Endothelial cell of umbilical vein (primary cell): ENCODE measurements at regions of chr3 and their contacts with region 1.

Region 1: DNA sequence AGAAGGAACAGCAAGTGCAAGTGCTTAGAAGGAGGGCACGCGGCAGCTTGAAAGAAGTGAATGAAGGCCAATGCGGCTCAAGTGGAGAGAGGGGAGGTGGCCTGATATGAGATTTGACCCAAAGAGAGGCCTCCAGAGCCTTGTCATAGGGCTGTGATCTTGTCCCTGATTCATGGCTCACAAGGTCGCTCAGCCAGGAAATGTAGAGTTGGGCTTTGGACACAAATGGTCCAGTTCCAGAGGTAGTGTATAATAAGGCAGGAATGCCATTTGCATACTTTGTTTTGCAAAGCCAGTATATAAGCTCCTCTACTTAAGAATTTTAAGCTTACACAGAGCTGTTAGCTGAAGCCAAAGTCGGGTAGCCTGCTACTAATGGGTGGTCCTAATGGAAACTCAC is 33.7 kb downstream of the HGD start:
- DNase-seq: no peak
- H3K4me3 ChIP-seq: no peak overlapping the region
- H3K27ac ChIP-seq: no peak overlapping the region
- H3K4me1 ChIP-seq: no peaks in the 10 kb centered on the region
- H3K27me3 ChIP-seq: no peaks in the 10 kb centered on the region
- CTCF ChIP-seq: no peak
- POLR2A ChIP-seq: no peak

Region 2: GRCh38 chr3:120636790-120637401 is 11.4 kb before region 1 on chr3:
- CTCF ChIA-PET with region 1: no interaction called
- POLR2A ChIA-PET with region 1: interaction called, 10 read pairs
- dilution Hi-C with region 1: no loop called
- intact Hi-C with region 1: no loop called
- DNase-seq: no peak
- H3K4me3 ChIP-seq: no peak overlapping the region
- H3K27ac ChIP-seq: no peak overlapping the region
- H3K4me1 ChIP-seq: no peaks in the 10 kb centered on the region
- H3K27me3 ChIP-seq: no peaks in the 10 kb centered on the region
- CTCF ChIP-seq: no peak
- POLR2A ChIP-seq: no peak

Region 3: DNA sequence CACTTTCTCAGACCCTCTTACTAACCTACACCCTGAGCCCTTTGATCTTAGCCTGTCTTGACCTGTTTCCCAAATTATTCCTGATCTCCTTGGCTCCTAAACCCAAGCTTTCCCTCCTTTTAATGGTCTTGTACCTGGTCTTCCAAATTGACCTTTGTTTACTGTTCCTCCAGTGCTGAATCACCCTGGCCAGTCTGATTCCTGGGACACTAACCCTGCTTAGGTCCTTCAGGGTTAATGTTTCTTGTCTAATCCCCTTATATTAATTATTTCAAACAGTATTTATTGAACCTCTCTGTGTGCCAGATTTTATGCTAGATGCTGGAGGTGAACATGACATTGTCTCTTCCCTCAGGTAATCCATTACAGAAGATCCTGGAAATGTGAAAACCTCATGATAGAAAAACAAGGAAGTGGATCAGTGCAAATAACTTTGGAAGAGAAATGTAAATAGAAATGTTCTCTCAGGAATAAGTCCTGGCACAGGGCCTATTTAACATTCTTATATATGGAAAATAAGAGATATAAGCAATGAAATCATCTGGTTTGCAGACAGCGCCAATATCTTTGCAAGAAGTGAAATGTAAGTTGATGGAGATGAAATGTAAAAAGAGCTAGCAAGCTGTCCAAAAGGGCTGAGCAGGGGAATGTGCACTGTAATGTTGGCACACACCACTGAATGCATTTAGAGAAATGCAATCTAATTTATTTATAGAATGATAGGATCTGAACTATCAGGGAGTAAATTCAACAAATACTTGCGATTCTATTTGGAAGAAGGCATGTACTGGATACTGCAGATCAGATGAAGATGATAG is 13.0 kb after region 1 on chr3:
- CTCF ChIA-PET with region 1: no interaction called
- POLR2A ChIA-PET with region 1: no interaction called
- dilution Hi-C with region 1: no loop called
- intact Hi-C with region 1: no loop called
- DNase-seq: no peak
- H3K4me3 ChIP-seq: no peak overlapping the region
- H3K27ac ChIP-seq: no peak overlapping the region
- H3K4me1 ChIP-seq: no peaks in the 10 kb centered on the region
- H3K27me3 ChIP-seq: no peaks in the 10 kb centered on the region
- CTCF ChIP-seq: no peak
- POLR2A ChIP-seq: no peak

Region 4: GRCh38 chr3:120726784-120727183 is 78.5 kb after region 1 on chr3:
- CTCF ChIA-PET with region 1: no interaction called
- POLR2A ChIA-PET with region 1: no interaction called
- dilution Hi-C with region 1: no loop called
- intact Hi-C with region 1: no loop called
- DNase-seq: no peak
- H3K4me3 ChIP-seq: no peak overlapping the region
- H3K27ac ChIP-seq: no peak overlapping the region
- H3K4me1 ChIP-seq: no peaks in the 10 kb centered on the region
- H3K27me3 ChIP-seq: no peaks in the 10 kb centered on the region
- CTCF ChIP-seq: no peak
- POLR2A ChIP-seq: no peak

Region 5: DNA sequence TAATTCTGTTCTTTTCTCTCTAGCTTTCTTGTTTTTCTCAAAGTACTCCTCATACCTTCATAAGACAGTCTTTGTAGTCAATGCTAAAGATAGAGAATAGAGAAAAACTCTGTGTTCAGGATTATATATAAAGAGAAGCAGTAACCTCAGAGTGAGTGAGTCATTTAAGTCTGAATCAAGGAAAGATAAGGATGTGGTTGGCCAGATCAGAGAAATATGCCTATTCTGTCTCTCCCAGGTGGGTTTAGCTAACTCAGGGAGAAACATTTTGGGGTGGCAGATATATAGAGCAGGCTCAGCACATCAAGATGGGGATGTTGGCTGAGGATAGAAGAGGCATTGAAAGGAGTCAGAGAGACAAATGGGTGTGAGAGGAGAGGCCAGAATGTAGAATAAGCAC is 125.6 kb after region 1 on chr3:
- CTCF ChIA-PET with region 1: no interaction called
- POLR2A ChIA-PET with region 1: no interaction called
- dilution Hi-C with region 1: no loop called
- intact Hi-C with region 1: no loop called
- DNase-seq: no peak
- H3K4me3 ChIP-seq: no peak overlapping the region
- H3K27ac ChIP-seq: no peak overlapping the region
- H3K4me1 ChIP-seq: peaks cover 4% of the 10 kb centered on the region
- H3K27me3 ChIP-seq: no peaks in the 10 kb centered on the region
- CTCF ChIP-seq: no peak
- POLR2A ChIP-seq: no peak